IMR-90 (cell line): ENCODE measurements at regions of chr14 and their contacts with region 1.

Region 1: DNA sequence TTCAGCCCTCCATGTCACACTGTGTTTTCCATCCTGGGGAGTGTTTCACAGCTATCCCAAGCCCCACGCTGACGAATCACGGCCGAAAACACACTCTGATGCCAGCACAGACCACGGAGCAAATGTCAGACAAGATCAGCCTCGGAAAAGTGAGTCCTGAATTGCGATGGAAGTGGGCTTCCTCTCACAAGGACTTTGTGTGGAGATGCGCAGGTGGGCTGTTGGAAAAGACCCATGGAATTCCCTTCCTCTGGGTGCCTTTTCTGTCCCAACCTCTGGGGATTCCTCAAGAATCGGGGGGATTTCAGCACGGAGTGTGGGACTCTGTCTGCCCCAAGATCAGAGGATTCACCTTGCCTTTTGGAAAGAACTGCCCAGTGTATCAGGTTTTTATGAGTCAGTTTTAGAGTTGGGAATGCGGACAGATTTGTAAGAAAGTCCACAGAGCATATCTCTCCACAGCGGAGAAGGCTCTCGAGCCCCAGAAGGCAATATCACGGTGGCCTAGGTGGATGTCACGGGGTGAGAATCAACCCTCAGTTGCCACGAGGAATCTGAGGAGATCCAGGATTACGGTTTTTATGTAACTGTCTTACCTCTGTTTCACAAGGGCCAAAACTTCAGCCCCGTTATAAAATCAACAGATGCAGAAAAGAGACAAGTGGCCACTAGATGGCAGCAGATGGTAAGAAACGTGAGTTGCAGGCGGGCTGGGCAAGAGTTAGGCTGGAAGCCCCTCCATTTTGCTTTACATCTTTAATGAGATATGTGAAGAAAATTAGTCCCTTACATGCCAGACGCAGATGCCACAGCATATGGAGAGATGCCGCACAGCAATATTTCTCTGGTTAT is 201.9 kb downstream of the DAD1 start:
- DNase-seq: peak; percentile 72
- ATAC-seq: peak; percentile 83
- H3K4me3 ChIP-seq: no peak overlapping the region
- H3K27ac ChIP-seq: no peak overlapping the region
- H3K4me1 ChIP-seq: no peaks in the 10 kb centered on the region; the same call in 1 of the 2 replicates
- H3K27me3 ChIP-seq: peaks cover 8% of the 10 kb centered on the region
- CTCF ChIP-seq: peak; percentile 85
- POLR2A ChIP-seq: no peak
- RAD21 ChIP-seq: peak; percentile 88

Region 2: DNA sequence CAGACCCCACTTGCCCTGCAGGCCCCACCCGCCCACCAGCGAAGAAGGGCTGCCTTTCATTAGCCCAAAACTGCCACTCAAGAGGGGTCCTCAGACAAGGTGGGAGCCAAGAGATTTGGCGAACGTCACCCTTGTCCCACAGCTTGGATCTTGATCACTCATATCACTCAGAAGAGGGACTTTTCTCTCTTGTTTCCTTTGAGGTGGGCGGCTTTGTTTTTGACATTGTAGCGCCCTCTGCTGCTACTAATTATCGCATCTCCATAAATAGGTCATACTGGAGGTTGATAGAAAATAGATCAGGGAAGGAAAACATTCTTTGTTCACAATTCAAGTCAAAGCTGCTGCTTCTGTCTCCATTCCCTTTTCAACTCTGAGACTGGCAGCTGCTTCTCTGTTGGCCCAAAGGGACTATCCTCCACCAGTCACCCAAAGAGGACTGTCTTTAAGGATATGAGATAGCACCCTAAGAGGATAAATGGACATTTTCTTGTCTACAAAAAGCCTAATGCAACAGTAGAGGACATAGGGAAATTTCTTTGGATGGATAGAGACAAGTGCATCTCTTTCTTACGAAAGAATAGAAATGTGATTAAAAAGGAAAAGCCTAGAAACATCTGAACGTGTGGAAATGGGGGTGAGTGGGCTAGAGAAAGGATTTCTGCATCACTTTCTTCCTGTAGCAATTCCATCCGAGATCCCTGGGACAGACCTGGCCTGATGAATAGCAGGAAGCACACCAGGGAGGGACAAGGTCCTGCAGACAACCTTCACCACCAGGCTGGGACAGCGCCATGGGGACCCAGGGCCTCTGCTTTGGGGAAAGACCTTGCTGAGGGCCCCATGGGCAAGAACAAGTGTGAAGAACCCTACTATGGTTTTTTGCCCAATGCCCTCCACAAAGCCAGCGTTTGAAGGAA is 86.0 kb after region 1 on chr14:
- CTCF ChIA-PET with region 1: interaction called, 6 read pairs
- POLR2A ChIA-PET with region 1: no interaction called
- dilution Hi-C with region 1: no loop called
- in situ Hi-C with region 1: loop called (anchors 5 kb)
- intact Hi-C with region 1: loop called (anchors 1 kb)
- DNase-seq: peak; percentile 25
- ATAC-seq: no peak
- H3K4me3 ChIP-seq: no peak overlapping the region
- H3K27ac ChIP-seq: no peak overlapping the region
- H3K4me1 ChIP-seq: no peaks in the 10 kb centered on the region
- H3K27me3 ChIP-seq: peaks cover 36% of the 10 kb centered on the region
- CTCF ChIP-seq: peak; percentile 50
- POLR2A ChIP-seq: no peak
- RAD21 ChIP-seq: peak; percentile 55

Region 3: DNA sequence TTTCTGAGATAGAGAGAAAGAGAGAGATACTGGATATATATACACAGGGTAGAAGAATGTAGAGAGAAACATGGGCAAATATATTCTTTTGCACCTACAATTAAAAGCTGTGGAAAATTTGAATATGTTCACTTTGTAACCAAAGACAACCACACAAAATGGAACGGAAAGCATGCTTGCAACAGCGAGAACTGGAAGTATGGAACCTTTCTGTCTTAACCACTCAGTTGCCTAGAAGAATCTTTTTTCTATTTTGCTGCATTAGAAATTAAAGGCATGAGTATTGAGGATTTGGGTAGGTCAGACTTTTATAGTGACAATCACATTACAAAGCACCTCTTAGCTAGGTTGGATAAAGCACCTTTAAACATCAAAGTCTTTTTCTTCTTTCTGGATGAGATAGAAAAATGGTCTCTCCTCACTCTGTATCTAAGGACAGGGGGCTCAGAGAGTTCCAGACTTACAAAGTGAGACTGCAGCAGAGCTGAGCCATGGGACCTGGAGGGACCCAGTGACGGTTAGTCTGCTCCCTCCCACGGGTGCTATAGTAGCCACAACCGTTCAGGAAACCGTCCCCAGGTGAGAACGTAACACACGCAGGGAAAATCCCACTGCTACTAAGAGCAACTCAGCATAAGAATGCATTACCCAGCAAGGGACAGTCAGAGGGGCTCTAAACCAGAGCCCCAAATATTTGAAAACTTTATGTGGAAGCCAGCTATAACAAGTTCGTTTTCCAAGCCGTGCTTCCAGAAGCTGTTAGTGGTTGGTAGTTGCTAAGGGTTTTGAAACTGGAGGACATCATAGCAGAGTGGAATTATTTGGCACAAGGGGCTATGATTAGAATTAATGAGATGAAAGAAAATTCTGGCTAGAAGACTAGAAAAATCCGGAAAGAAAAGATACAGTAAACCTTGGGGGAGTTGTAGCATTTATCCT is 104.8 kb after region 1 on chr14:
- CTCF ChIA-PET with region 1: no interaction called
- POLR2A ChIA-PET with region 1: no interaction called
- dilution Hi-C with region 1: no loop called
- in situ Hi-C with region 1: no loop called
- intact Hi-C with region 1: no loop called
- DNase-seq: no peak
- ATAC-seq: no peak
- H3K4me3 ChIP-seq: no peak overlapping the region
- H3K27ac ChIP-seq: no peak overlapping the region
- H3K4me1 ChIP-seq: no peaks in the 10 kb centered on the region
- H3K27me3 ChIP-seq: peaks cover 67% of the 10 kb centered on the region
- CTCF ChIP-seq: no peak
- POLR2A ChIP-seq: no peak
- RAD21 ChIP-seq: no peak

Region 4: DNA sequence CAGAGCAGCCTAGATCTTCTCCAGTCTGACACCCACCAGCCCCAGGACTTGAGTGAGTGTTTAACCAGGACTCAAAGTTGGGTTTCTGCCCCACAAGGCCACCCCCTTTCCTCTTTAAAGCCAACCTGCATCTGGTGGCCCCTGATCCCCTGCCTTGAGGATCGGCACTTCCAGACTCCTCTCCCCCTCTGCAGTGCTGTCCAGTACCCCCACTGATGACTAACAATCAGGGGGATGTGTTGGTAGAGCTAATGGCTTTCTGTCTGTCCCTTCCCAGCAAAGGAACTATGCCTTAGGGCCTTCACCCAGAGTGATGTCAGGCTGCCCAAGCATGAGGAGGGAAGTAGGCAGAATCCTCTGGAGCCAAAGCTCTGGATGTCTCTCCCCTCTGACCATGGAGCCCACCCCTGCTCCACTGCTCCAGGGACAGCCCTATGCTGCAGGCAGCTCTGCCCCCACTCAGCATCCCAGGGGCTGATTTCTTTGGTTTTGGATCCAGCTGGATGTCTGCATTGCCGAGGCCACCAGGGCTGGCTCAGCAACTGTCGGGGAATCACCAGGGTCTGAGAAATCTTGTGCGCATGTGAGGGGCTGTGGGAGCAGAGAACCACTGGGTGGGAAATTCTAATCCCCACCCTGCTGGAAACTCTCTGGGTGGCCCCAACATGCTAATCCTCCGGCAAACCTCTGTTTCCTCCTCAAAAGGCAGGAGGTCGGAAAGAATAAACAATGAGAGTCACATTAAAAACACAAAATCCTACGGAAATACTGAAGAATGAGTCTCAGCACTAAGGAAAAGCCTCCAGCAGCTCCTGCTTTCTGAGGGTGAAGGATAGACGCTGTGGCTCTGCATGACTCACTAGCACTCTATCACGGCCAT is 158.9 kb after region 1 on chr14:
- CTCF ChIA-PET with region 1: no interaction called
- POLR2A ChIA-PET with region 1: no interaction called
- dilution Hi-C with region 1: no loop called
- in situ Hi-C with region 1: no loop called
- intact Hi-C with region 1: loop called (anchors 2 kb)
- DNase-seq: peak; percentile 89
- ATAC-seq: peak; percentile 95
- H3K4me3 ChIP-seq: no peak overlapping the region
- H3K27ac ChIP-seq: peak overlapping the region; percentile 10; the same call in 1 of the 2 replicates
- H3K4me1 ChIP-seq: peaks cover 23% of the 10 kb centered on the region
- H3K27me3 ChIP-seq: peaks cover 7% of the 10 kb centered on the region; the same call in 1 of the 2 replicates
- CTCF ChIP-seq: no peak
- POLR2A ChIP-seq: no peak
- RAD21 ChIP-seq: peak; percentile 21; the same call in 1 of the 2 replicates

Region 5: GRCh38 chr14:22653012-22653621 is 266.0 kb after region 1 on chr14:
- CTCF ChIA-PET with region 1: interaction called, 4 read pairs
- POLR2A ChIA-PET with region 1: no interaction called
- dilution Hi-C with region 1: no loop called
- in situ Hi-C with region 1: loop called (anchors 10 kb)
- intact Hi-C with region 1: loop called (anchors 5 kb)
- DNase-seq: peak; percentile 74
- ATAC-seq: peak; percentile 97
- H3K4me3 ChIP-seq: no peak overlapping the region
- H3K27ac ChIP-seq: no peak overlapping the region
- H3K4me1 ChIP-seq: no peaks in the 10 kb centered on the region
- H3K27me3 ChIP-seq: 0 out of 2 replicates have a peak, but pooled peaks cover 1% of the 10 kb centered on the region
- CTCF ChIP-seq: peak; percentile 95
- POLR2A ChIP-seq: 0 out of 2 replicates have a peak, but pooled peaks have one; percentile 23
- RAD21 ChIP-seq: peak; percentile 93

Region 6: DNA sequence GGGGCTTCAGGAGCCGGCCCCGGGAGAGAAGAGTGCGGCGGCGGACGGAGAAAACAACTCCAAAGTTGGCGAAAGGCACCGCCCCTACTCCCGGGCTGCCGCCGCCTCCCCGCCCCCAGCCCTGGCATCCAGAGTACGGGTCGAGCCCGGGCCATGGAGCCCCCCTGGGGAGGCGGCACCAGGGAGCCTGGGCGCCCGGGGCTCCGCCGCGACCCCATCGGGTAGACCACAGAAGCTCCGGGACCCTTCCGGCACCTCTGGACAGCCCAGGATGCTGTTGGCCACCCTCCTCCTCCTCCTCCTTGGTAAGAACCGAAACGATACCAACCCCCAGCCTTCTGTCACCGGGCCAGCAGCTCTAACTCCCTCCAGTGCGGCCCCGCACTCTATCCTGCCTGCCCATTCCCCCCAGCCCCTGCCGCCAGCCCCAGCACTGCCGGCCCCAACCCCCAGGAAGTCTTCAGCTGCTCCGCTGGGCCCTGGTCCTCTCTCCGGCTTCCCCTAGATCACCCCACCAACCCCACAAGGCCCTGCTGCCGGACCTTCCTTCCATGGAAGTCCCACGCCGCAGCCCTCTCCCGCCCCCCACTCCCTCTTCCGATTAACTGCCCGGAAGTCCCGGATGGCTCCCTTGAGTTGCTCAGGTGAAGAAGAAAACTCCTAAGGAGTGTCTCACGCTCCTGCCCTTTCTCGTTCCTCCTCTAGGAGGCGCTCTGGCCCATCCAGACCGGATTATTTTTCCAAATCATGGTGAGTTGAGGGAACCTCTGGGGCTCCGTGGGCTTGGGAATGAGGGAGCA is 485.1 kb after region 1 on chr14:
- CTCF ChIA-PET with region 1: no interaction called
- POLR2A ChIA-PET with region 1: no interaction called
- dilution Hi-C with region 1: no loop called
- in situ Hi-C with region 1: loop called (anchors 25 kb)
- intact Hi-C with region 1: no loop called
- DNase-seq: peak; percentile 81
- ATAC-seq: peak; percentile 63
- H3K4me3 ChIP-seq: peak overlapping the region; percentile 79
- H3K27ac ChIP-seq: peak overlapping the region; percentile 84
- H3K4me1 ChIP-seq: peaks cover 3% of the 10 kb centered on the region; the same call in 1 of the 2 replicates
- H3K27me3 ChIP-seq: no peaks in the 10 kb centered on the region
- CTCF ChIP-seq: peak; percentile 91
- POLR2A ChIP-seq: no peak
- RAD21 ChIP-seq: peak; percentile 72

Region 7: GRCh38 chr14:22900081-22900799 is 513.1 kb after region 1 on chr14:
- CTCF ChIA-PET with region 1: no interaction called
- POLR2A ChIA-PET with region 1: no interaction called
- dilution Hi-C with region 1: no loop called
- in situ Hi-C with region 1: no loop called
- intact Hi-C with region 1: loop called (anchors 10 kb)
- DNase-seq: peak; percentile 78
- ATAC-seq: peak; percentile 81
- H3K4me3 ChIP-seq: no peak overlapping the region
- H3K27ac ChIP-seq: no peak overlapping the region
- H3K4me1 ChIP-seq: peaks cover 17% of the 10 kb centered on the region
- H3K27me3 ChIP-seq: no peaks in the 10 kb centered on the region
- CTCF ChIP-seq: peak; percentile 74
- POLR2A ChIP-seq: no peak
- RAD21 ChIP-seq: peak; percentile 71